ENCODE measurements at regions of chr6 and their contacts with region 1.

Region 1: DNA sequence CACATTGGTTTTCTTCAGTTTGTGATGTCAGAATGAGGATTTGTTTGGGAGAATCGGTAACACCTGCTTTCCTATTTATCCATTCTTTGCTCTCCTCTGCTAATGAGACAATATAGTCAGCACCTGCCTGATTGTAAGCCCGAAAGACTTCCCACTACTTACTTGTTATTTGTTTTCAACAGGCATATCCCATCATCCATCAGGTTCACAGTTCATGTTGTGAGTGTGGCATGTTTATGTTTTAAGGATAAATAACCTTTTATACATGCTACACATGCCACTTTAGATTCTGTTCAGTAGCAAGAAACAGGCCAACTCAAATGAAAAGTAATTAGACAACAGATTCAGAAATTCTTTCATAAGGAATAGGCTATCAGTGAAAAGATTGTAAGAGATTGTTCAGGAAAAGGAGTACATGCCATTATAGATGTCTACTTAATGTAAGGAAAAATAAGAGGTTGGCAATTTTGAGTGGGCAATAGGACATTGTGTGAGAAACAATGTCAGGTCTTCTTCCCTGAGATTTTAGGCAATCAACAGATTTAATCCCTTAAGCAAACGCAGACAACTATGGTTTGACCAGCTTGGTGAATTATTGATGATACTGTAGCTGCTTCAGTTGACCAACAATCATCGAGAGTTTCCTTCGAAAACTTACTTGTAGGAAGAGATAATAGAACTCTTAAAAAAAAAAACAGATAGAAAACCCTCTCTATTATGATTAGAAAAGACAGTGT is 7.9 kb upstream of the GPRC6A start:
- DNase-seq: no peak
- H3K4me3 Mint-ChIP-seq: no peak overlapping the region
- H3K27ac Mint-ChIP-seq: no peak overlapping the region
- H3K4me1 Mint-ChIP-seq: no peaks in the 10 kb centered on the region
- H3K27me3 Mint-ChIP-seq: peaks cover 6% of the 10 kb centered on the region

Region 2: DNA sequence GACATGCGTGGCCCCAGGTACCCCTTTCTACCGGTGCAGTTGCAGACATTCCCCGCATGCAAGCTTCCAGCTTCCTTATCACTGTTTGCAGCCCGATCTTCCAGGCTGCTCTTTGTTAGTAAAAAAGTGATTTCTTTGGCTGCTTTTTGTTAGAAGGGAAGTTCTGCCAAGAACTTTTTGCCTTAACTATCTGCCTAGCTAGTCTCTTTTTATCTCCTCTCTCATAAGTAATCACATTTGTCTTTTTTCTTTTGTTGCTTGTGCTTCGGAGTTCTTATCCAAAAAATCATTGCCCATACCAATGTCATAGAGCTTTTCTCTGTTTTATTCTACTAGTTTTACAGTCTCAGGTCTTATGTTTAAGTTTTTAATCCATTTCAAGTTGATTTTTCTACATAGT is 91.6 kb before region 1 on chr6:
- CTCF ChIA-PET with region 1: no interaction called
- intact Hi-C with region 1: no loop called
- DNase-seq: no peak
- H3K4me3 Mint-ChIP-seq: no peak overlapping the region
- H3K27ac Mint-ChIP-seq: no peak overlapping the region
- H3K4me1 Mint-ChIP-seq: no peaks in the 10 kb centered on the region
- H3K27me3 Mint-ChIP-seq: no peaks in the 10 kb centered on the region

Region 3: DNA sequence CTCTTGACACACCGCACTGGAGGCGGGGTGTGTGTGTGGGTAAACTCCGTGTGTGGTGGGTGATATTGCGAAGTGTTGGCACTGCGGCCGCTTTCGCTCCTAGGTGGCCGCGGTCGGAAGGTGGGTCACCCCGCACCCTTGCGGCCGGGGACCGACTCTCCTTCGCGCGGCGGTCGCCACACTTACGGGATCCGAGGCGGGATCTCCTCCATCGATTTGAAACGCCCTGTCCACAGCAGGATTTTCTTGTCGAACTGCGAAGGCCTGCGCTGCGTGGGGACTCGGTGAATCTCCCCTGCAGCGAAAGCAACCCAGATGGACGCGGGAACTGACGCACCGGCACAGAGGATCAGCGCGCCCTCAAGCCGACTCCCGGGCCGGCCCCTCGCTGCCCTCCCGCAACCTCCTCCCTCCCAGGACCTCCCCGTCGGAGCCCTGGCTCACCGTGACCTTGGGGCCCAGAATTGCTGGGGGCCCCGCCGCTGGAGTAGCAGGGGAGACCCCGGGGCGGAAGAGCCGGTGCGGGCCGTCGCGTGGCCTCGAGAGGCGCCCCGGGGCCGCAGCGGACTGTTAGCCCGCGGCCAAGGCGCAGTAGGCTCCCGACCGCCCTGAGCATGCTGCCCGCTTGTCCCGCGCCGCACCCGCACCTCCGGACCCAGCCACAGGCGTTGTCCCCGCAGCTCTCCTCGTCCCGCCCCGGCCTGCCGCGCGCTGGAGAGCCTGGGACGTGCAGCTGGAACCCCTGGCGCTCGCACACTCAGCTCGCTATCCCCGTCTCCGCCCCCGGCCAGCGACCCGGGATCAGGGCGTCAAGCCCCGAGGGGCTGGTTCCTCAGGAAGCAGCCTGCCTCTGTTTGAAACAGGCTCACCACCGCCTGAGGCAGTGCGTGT is 71.6 kb before region 1 on chr6 and contains the start of gene FAM162B:
- CTCF ChIA-PET with region 1: no interaction called
- intact Hi-C with region 1: no loop called
- DNase-seq: peak; percentile 14
- H3K4me3 Mint-ChIP-seq: peak within 1 kb of the TSS; percentile 61
- H3K27ac Mint-ChIP-seq: no peak within 1 kb of the TSS
- H3K4me1 Mint-ChIP-seq: peaks cover 10% of the 10 kb centered on the region
- H3K27me3 Mint-ChIP-seq: peaks cover 35% of the 10 kb centered on the region
- total RNA-seq, gene FAM162B: not detected

Region 4: DNA sequence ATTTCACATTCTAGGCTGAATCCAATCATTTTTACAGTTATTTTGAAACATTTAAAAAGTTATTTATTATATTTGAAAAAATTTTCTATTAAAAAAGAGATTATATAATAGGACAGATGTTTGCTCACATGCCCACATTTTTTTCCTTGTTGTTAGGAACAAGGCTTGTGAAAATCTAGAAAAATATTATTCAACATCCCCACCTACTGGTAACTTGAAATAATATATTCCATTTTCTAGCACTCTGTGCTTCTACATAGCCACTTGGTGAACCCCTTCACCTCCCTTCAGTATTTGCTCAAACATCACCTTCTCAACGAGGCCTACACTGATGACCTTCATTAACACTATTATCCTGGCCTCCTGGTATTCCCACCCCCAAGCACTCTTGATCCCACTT is 10.5 kb after region 1 on chr6:
- CTCF ChIA-PET with region 1: no interaction called
- intact Hi-C with region 1: no loop called
- DNase-seq: no peak
- H3K4me3 Mint-ChIP-seq: no peak overlapping the region
- H3K27ac Mint-ChIP-seq: no peak overlapping the region
- H3K4me1 Mint-ChIP-seq: no peaks in the 10 kb centered on the region
- H3K27me3 Mint-ChIP-seq: peaks cover 7% of the 10 kb centered on the region

Region 5: GRCh38 chr6:116859264-116859663 is 22.5 kb after region 1 on chr6:
- CTCF ChIA-PET with region 1: no interaction called
- intact Hi-C with region 1: no loop called
- DNase-seq: no peak
- H3K4me3 Mint-ChIP-seq: no peak overlapping the region
- H3K27ac Mint-ChIP-seq: no peak overlapping the region
- H3K4me1 Mint-ChIP-seq: no peaks in the 10 kb centered on the region
- H3K27me3 Mint-ChIP-seq: no peaks in the 10 kb centered on the region

Region 6: DNA sequence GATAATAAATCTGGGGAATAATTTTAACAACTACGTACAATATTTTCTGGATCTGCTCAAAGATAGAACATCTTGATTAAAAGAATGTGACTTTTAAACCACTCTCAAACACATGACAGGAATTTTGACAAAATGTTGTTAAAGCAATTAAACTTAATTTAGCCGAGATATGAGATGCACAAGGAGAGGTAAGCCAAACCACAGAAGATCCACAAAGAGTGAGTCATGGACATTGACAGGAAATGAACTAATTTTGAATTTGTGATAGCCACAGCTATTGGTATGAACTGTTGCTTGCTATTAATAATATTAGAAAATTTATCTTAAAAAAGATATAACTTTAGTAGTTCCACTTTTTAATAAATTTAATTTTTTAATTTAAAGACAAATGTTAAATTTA is 400.8 kb after region 1 on chr6:
- CTCF ChIA-PET with region 1: no interaction called
- intact Hi-C with region 1: loop called (anchors 5 kb)
- DNase-seq: no peak
- H3K4me3 Mint-ChIP-seq: no peak overlapping the region
- H3K27ac Mint-ChIP-seq: no peak overlapping the region
- H3K4me1 Mint-ChIP-seq: no peaks in the 10 kb centered on the region
- H3K27me3 Mint-ChIP-seq: peaks cover 12% of the 10 kb centered on the region

Measured in activated naive CD4-positive, alpha-beta T cell treated with anti-CD3 and anti-CD28 coated beads for 36 hours (primary cell).